ENCODE measurements at regions of chr14 and their contacts with region 1.

Region 1: DNA sequence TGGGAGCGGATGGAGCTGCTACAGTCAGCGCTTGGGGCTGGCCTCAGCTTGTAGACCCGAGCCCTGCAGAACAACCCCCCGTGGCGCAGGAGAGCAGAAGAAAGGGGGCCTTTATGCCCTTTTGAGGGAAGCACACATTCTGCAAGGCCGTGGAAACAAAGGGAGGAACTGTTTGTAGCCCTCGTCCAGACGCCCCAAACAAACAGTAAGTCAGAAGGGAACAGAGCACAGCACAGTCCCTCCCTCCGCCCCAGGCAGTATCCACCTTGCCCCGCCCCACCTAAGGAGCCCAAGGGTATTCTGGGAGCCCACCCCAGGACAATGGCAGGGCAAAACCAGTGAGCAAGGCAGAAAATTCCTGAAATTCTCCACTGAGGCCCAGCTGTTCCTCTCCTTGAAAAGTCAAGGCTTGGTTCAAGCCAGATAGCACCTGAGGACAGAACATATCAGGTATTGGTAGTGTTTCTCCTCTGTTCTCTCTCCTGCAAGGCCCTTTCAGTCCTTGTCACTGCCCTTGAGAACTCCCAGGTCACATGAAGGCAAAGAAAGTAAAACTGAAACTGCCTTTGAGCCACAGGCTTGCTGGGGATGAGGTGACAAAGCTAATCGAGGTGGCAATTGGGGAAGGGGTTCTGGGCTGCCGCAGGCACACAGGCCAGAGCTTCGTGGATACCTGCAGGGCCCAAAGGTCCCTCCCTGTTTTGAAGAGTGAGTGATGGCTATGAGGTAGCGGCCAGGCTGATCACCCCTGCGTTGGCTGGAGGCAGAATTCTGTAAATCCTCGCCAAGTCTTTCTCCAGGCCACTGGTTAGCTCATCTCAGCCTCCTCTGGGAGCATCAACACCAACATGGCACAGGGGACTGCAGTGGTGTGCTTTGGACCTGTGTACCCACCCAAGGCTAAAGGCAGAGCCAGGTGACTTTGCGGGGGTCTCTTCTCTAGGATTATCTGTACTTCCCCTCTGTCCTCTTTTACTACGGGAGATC is 499 bp downstream of the DGLUCY start:
- DNase-seq: peak; percentile 82
- ATAC-seq: peak; percentile 81
- H3K4me3 Mint-ChIP-seq: peak overlapping the region; percentile 96
- H3K27ac Mint-ChIP-seq: peak overlapping the region; percentile 95
- H3K4me1 Mint-ChIP-seq: peaks cover 57% of the 10 kb centered on the region
- H3K27me3 Mint-ChIP-seq: no peaks in the 10 kb centered on the region

Region 2: GRCh38 chr14:90903101-90903500 is 211.3 kb before region 1 on chr14:
- POLR2A ChIA-PET with region 1: interaction called, 21 read pairs
- DNase-seq: no peak
- ATAC-seq: peak; percentile 93
- H3K4me3 Mint-ChIP-seq: no peak overlapping the region
- H3K27ac Mint-ChIP-seq: peak overlapping the region; percentile 46
- H3K4me1 Mint-ChIP-seq: peaks cover 17% of the 10 kb centered on the region
- H3K27me3 Mint-ChIP-seq: no peaks in the 10 kb centered on the region

Region 3: DNA sequence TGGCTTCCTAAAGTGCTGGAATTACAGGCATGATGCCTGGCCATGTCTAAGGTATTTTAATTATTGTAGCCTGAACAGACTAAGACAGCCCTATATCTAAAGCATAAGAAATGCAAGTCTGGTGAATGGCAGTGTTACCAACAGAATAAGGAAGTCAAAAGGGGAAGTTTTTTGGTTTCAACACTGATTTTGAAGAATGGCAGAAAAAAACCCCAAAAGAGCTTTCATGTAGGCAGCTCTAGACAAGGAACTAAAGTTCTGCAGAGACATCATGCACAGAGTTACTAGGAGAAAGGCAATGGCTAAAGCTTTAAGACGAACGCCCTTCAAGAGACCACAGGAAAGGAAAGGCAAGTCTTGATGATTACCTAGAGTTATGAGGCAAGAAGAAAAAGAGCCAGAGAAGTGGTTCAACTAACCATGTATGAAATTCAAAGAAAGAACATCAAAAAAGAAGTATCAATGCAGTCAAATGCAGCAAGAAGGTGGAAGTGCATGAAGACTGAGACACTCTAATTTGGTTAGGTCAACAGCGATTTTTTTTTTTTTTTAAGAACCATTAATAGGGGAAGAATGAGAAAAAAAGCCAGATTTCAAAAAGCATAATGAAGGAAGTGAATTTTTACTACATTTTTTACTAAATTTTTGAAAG is 104.7 kb before region 1 on chr14:
- POLR2A ChIA-PET with region 1: interaction called, 12 read pairs
- DNase-seq: no peak
- ATAC-seq: peak; percentile 94
- H3K4me3 Mint-ChIP-seq: peak overlapping the region; percentile 65
- H3K27ac Mint-ChIP-seq: peak overlapping the region; percentile 82
- H3K4me1 Mint-ChIP-seq: peaks cover 37% of the 10 kb centered on the region
- H3K27me3 Mint-ChIP-seq: no peaks in the 10 kb centered on the region

Region 4: DNA sequence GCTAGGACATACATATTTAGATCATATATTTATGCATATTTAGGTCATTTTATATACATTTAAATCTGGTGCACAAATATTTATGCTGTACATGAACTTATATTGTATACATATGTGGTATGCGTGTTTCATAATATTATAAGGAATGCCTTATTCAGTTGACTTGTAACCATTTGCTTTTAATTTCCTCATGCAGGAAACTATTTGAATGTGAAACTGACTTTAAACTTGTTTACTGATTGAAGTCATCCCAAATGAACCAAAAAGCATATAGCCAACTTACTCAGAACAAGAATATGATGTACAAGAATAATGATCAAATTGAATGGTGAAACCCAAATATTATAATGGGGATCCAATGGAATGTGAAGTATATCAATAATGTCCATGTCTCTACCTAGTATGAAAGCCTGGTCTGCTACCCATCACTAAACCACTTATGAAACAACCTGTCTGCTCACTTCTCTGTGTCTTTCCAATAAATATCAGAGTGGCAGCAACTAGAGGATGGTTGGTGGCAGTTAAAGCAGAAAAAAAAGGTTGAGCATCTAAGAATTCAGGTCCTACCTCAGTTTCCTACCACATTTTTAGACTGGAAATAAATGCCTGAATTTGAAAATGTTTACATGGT is 92.3 kb before region 1 on chr14:
- POLR2A ChIA-PET with region 1: interaction called, 16 read pairs
- DNase-seq: no peak
- ATAC-seq: no peak
- H3K4me3 Mint-ChIP-seq: peak overlapping the region; percentile 84
- H3K27ac Mint-ChIP-seq: peak overlapping the region; percentile 93
- H3K4me1 Mint-ChIP-seq: peaks cover 57% of the 10 kb centered on the region
- H3K27me3 Mint-ChIP-seq: no peaks in the 10 kb centered on the region

Region 5: GRCh38 chr14:91078095-91078737 is 36.2 kb before region 1 on chr14:
- POLR2A ChIA-PET with region 1: interaction called, 23 read pairs
- DNase-seq: peak; percentile 36
- ATAC-seq: peak; percentile 97
- H3K4me3 Mint-ChIP-seq: peak overlapping the region; percentile 63
- H3K27ac Mint-ChIP-seq: peak overlapping the region; percentile 88
- H3K4me1 Mint-ChIP-seq: peaks cover 57% of the 10 kb centered on the region
- H3K27me3 Mint-ChIP-seq: no peaks in the 10 kb centered on the region

Region 6: DNA sequence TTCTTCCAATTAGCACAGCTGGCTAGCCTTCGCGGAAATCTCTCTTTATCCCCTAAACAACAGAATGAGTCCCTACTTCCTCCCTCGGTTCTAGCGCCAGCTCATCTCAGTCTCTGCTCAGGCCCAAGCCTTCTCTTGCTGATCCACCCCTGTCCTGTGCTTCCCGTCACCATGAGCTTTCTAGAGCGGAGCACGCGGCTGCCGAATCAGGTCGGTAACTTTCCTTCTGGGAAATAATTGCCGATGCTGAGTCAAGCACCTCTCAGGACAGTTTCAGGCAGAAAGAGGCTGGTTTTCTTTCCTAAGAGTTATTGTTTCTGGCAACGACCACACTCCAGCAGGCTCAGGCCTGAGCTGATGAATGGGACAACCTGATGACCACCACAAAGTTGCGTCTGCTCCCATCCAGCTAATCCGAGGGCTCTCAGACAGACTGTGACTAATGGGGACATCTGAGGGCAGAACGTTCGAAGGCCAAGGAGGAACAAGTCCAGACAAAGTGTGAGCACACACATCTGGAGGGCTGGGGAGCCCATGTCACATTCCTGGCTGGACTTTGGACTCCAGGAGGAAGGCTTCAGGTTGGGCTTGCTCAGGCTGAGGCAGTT is 143.7 kb after region 1 on chr14:
- POLR2A ChIA-PET with region 1: no interaction called
- DNase-seq: no peak
- ATAC-seq: no peak
- H3K4me3 Mint-ChIP-seq: no peak overlapping the region
- H3K27ac Mint-ChIP-seq: peak overlapping the region; percentile 40
- H3K4me1 Mint-ChIP-seq: peaks cover 55% of the 10 kb centered on the region
- H3K27me3 Mint-ChIP-seq: no peaks in the 10 kb centered on the region

Region 7: DNA sequence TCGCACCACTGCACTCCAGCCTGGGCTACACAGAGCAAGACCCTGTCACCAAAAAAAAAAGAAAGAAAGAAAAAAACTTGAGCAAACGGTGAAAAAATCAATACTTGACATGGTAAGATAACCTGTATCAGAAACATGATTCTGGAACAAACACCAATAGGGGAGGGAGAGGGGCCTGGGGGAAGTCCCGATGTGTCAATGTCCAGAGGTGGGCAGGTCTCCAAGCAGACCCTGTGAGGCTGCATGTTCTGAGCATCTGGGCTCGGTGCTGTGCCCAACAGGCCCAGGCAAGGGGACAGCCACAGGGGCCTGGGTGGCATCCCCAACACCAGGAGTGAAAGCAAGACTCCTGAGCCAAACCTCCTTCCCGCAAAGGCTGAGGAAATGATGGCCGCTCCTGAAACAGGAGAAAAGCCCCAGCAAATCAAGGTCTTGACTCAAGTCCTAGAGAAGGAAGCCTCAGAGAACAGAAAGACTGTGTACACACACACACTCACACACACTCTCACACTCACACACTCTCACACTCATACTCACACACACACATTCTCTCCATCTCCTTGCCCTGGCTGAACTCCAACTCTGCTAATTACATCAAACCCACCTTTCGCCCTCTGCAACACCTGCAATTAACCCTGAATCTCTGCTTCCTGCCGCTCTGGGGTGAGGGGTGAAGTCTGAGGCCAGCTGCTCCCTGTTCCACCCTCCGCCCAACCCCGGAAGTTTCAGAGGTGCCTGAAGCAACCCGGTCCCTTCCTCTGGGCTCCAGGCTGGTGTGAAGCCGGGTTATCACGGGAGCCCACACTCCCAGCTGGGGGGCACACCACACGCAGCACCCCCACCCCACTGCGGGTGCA is 282.8 kb after region 1 on chr14:
- POLR2A ChIA-PET with region 1: no interaction called
- DNase-seq: peak; percentile 75
- ATAC-seq: peak; percentile 81
- H3K4me3 Mint-ChIP-seq: peak overlapping the region; percentile 86
- H3K27ac Mint-ChIP-seq: peak overlapping the region; percentile 91
- H3K4me1 Mint-ChIP-seq: peaks cover 73% of the 10 kb centered on the region
- H3K27me3 Mint-ChIP-seq: no peaks in the 10 kb centered on the region